CD8-positive, alpha-beta T cell (primary cell): ENCODE measurements at regions of chr20 and their contacts with region 1.

Region 1: GRCh38 chr20:8305449-8305978 is 173.4 kb downstream of the PLCB1 start:
- DNase-seq: peak; percentile 16 to 88 (median 69)
- ATAC-seq: peak; percentile 97
- H3K4me3 ChIP-seq: no peak overlapping the region
- H3K4me3 Mint-ChIP-seq: no peak overlapping the region
- H3K27ac ChIP-seq: no peak overlapping the region
- H3K27ac Mint-ChIP-seq: no peak overlapping the region
- H3K4me1 ChIP-seq: peaks cover 6% of the 10 kb centered on the region
- H3K4me1 Mint-ChIP-seq: peaks cover 7% of the 10 kb centered on the region
- H3K27me3 ChIP-seq: no peaks in the 10 kb centered on the region
- H3K27me3 Mint-ChIP-seq: no peaks in the 10 kb centered on the region
- CTCF ChIP-seq: peak; percentile 67

Region 2: GRCh38 chr20:8049310-8049709 is 256.2 kb before region 1 on chr20:
- CTCF ChIA-PET with region 1: no interaction called
- POLR2A ChIA-PET with region 1: no interaction called
- intact Hi-C with region 1: loop called in 1 of 2 experiments (anchors 5 kb)
- DNase-seq: no peak
- ATAC-seq: no peak
- H3K4me3 ChIP-seq: no peak overlapping the region
- H3K4me3 Mint-ChIP-seq: no peak overlapping the region
- H3K27ac ChIP-seq: no peak overlapping the region
- H3K27ac Mint-ChIP-seq: no peak overlapping the region
- H3K4me1 ChIP-seq: no peaks in the 10 kb centered on the region
- H3K4me1 Mint-ChIP-seq: peaks cover 7% of the 10 kb centered on the region
- H3K27me3 ChIP-seq: no peaks in the 10 kb centered on the region
- H3K27me3 Mint-ChIP-seq: peaks cover 3% of the 10 kb centered on the region
- CTCF ChIP-seq: no peak

Region 3: GRCh38 chr20:8389381-8390036 is 84.0 kb after region 1 on chr20:
- CTCF ChIA-PET with region 1: interaction called, 3 read pairs
- POLR2A ChIA-PET with region 1: no interaction called
- intact Hi-C with region 1: loop called in 1 of 2 experiments (anchors 10 kb)
- DNase-seq: peak in 2 of 9 experiments; percentile 52 to 62
- ATAC-seq: peak; percentile 34
- H3K4me3 ChIP-seq: no peak overlapping the region
- H3K4me3 Mint-ChIP-seq: no peak overlapping the region
- H3K27ac ChIP-seq: no peak overlapping the region
- H3K27ac Mint-ChIP-seq: no peak overlapping the region
- H3K4me1 ChIP-seq: no peaks in the 10 kb centered on the region
- H3K4me1 Mint-ChIP-seq: peaks cover 3% of the 10 kb centered on the region
- H3K27me3 ChIP-seq: no peaks in the 10 kb centered on the region
- H3K27me3 Mint-ChIP-seq: no peaks in the 10 kb centered on the region
- CTCF ChIP-seq: peak; percentile 74